B cell (primary cell): ENCODE measurements at regions of chr16 and their contacts with region 1.

Region 1: GRCh38 chr16:31142109-31143010 is 6.8 kb upstream of the PRSS8 start:
- DNase-seq: peak; percentile 99
- ATAC-seq: peak; percentile 95
- H3K4me3 ChIP-seq: peak overlapping the region in 4 of 5 experiments; percentile 21 to 71 (median 50)
- H3K4me3 Mint-ChIP-seq: peak overlapping the region; percentile 76
- H3K27ac ChIP-seq: peak overlapping the region; percentile 21 to 54
- H3K27ac Mint-ChIP-seq: peak overlapping the region; percentile 88
- H3K4me1 ChIP-seq: peaks cover 6 to 13% of the 10 kb centered on the region in 2 donors
- H3K4me1 Mint-ChIP-seq: peaks cover 9% of the 10 kb centered on the region
- H3K27me3 ChIP-seq: no peaks in the 10 kb centered on the region
- H3K27me3 Mint-ChIP-seq: peaks cover 6% of the 10 kb centered on the region
- CTCF ChIP-seq: peak; percentile 90

Region 2: GRCh38 chr16:30997000-30997886 is 145.1 kb before region 1 on chr16:
- CTCF ChIA-PET with region 1: interaction called, 6 read pairs
- POLR2A ChIA-PET with region 1: interaction called, 6 read pairs
- intact Hi-C with region 1: loop called (anchors 1 kb)
- DNase-seq: peak; percentile 88
- ATAC-seq: peak; percentile 100
- H3K4me3 ChIP-seq: peak overlapping the region in 4 of 5 experiments; percentile 54 to 72 (median 66)
- H3K4me3 Mint-ChIP-seq: peak overlapping the region; percentile 91
- H3K27ac ChIP-seq: peak overlapping the region; percentile 29 to 62
- H3K27ac Mint-ChIP-seq: peak overlapping the region; percentile 92
- H3K4me1 ChIP-seq: peaks cover 9 to 13% of the 10 kb centered on the region in 2 donors
- H3K4me1 Mint-ChIP-seq: peaks cover 9% of the 10 kb centered on the region
- H3K27me3 ChIP-seq: peaks cover 0 to 7% (median 0%) of the 10 kb centered on the region in 4 experiments
- H3K27me3 Mint-ChIP-seq: no peaks in the 10 kb centered on the region
- CTCF ChIP-seq: no peak

Region 3: GRCh38 chr16:31094424-31095120 is 47.8 kb before region 1 on chr16 and contains the start of gene VKORC1:
- CTCF ChIA-PET with region 1: interaction called, 11 read pairs
- POLR2A ChIA-PET with region 1: interaction called, 5 read pairs
- intact Hi-C with region 1: loop called (anchors 1 kb)
- DNase-seq: peak; percentile 90
- ATAC-seq: peak; percentile 89
- H3K4me3 ChIP-seq: peak within 1 kb of the TSS; percentile 50 to 99 (median 73)
- H3K4me3 Mint-ChIP-seq: peak within 1 kb of the TSS; percentile 98
- H3K27ac ChIP-seq: peak within 1 kb of the TSS; percentile 81 to 85
- H3K27ac Mint-ChIP-seq: peak within 1 kb of the TSS; percentile 96
- H3K4me1 ChIP-seq: peaks cover 14 to 31% of the 10 kb centered on the region in 2 donors
- H3K4me1 Mint-ChIP-seq: peaks cover 29% of the 10 kb centered on the region
- H3K27me3 ChIP-seq: no peaks in the 10 kb centered on the region
- H3K27me3 Mint-ChIP-seq: no peaks in the 10 kb centered on the region
- CTCF ChIP-seq: no peak
- total RNA-seq, gene VKORC1: 36.8 and 45.7 TPM in 2 replicates

Region 4: GRCh38 chr16:31157136-31157535 is 14.8 kb after region 1 on chr16:
- CTCF ChIA-PET with region 1: interaction called, 34 read pairs
- POLR2A ChIA-PET with region 1: no interaction called
- intact Hi-C with region 1: no loop called
- DNase-seq: no peak
- ATAC-seq: peak; percentile 53
- H3K4me3 ChIP-seq: no peak overlapping the region
- H3K4me3 Mint-ChIP-seq: no peak overlapping the region
- H3K27ac ChIP-seq: no peak overlapping the region
- H3K27ac Mint-ChIP-seq: no peak overlapping the region
- H3K4me1 ChIP-seq: peaks cover 0 to 6% of the 10 kb centered on the region in 2 donors
- H3K4me1 Mint-ChIP-seq: peaks cover 8% of the 10 kb centered on the region
- H3K27me3 ChIP-seq: peaks cover 0 to 2% (median 0%) of the 10 kb centered on the region in 4 experiments
- H3K27me3 Mint-ChIP-seq: peaks cover 5% of the 10 kb centered on the region
- CTCF ChIP-seq: no peak

Region 5: DNA sequence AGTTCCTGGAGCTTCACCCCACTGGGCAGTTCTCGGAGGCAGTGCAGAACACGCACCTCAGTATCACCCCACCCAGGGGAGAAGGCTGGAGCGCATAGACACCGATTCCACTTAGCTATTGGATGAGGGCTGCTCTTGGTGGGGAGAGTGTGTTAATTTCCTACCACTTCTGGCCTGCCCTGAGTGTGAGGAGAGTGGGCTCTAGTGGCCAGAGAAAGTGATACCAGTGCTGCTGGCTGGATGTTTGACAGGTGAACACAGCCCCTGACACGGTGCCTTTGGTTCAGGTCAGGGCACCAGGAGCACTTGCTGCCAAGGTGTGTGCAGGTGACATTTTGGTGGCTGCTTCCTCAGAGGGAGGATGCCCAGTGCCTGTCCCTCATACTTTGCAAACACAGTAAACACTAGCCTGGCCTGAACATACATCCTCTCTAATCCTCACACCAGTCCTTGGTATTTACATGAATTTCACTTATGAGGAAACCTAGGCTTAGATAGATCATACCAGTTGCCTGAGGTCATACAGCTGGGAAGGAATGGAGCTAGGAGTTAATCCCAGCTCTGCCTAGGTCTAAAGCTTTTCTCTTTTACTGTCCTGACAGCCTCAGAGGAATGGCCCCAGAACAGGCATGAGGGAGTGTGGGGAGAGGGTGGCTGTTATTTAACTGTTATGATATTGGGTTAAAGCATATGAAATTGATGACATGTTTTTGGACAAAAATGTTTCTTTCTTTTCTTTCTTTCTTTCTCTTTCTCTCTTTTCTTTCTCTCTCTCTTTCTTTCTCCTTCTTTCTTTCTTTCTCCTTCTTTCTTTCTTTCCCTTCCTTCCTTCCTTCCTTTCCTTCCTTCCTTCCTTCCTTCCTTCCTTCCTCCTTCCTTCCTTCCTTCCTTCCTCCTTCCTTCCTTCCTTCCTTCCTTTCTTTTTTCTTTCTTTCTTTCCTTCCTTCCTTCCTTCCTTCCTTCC is 191.6 kb after region 1 on chr16:
- CTCF ChIA-PET with region 1: interaction called, 16 read pairs
- POLR2A ChIA-PET with region 1: interaction called, 5 read pairs
- intact Hi-C with region 1: no loop called
- DNase-seq: peak; percentile 68
- ATAC-seq: peak; percentile 85
- H3K4me3 ChIP-seq: no peak overlapping the region
- H3K4me3 Mint-ChIP-seq: no peak overlapping the region
- H3K27ac ChIP-seq: no peak overlapping the region
- H3K27ac Mint-ChIP-seq: no peak overlapping the region
- H3K4me1 ChIP-seq: peaks cover 7 to 19% of the 10 kb centered on the region in 2 donors
- H3K4me1 Mint-ChIP-seq: peaks cover 23% of the 10 kb centered on the region
- H3K27me3 ChIP-seq: peaks cover 0 to 28% (median 4%) of the 10 kb centered on the region in 4 experiments
- H3K27me3 Mint-ChIP-seq: peaks cover 12% of the 10 kb centered on the region
- CTCF ChIP-seq: peak; percentile 64